Endothelial cell of umbilical vein (primary cell): ENCODE measurements at regions of chr16 and their contacts with region 1.

Region 1: GRCh38 chr16:70470927-70471341 is 16.5 kb downstream of the FCSK start:
- DNase-seq: peak; percentile 18
- H3K4me3 ChIP-seq: no peak overlapping the region
- H3K27ac ChIP-seq: no peak overlapping the region
- H3K4me1 ChIP-seq: no peaks in the 10 kb centered on the region
- H3K27me3 ChIP-seq: no peaks in the 10 kb centered on the region
- CTCF ChIP-seq: peak; percentile 36 to 58
- POLR2A ChIP-seq: no peak

Region 2: GRCh38 chr16:70276392-70276791 is 194.5 kb before region 1 on chr16:
- CTCF ChIA-PET with region 1: no interaction called
- POLR2A ChIA-PET with region 1: no interaction called
- dilution Hi-C with region 1: no loop called
- intact Hi-C with region 1: no loop called
- DNase-seq: no peak
- H3K4me3 ChIP-seq: no peak overlapping the region
- H3K27ac ChIP-seq: no peak overlapping the region
- H3K4me1 ChIP-seq: no peaks in the 10 kb centered on the region
- H3K27me3 ChIP-seq: no peaks in the 10 kb centered on the region
- CTCF ChIP-seq: no peak
- POLR2A ChIP-seq: no peak

Region 3: DNA sequence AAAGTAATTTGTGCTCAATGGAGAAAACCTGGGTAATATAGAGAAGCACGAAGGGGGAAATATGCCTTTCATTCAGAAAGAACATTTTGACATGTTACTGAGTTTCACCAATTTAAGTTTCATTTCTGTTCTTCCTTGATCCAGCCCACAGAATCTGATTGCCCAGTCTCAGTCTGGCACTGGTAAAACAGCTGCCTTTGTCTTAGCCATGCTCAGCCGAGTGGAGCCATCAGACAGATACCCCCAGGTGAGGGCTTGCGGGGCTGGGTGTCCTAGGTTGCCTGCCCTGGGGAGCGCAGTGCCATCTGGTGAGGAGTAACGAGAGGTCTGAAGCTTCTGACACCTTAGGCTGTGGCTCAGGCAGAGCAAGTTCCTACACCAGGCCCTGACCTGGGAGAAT is 106.5 kb before region 1 on chr16:
- CTCF ChIA-PET with region 1: interaction called, 22 read pairs
- POLR2A ChIA-PET with region 1: no interaction called
- dilution Hi-C with region 1: no loop called
- intact Hi-C with region 1: no loop called
- DNase-seq: no peak
- H3K4me3 ChIP-seq: no peak overlapping the region
- H3K27ac ChIP-seq: no peak overlapping the region
- H3K4me1 ChIP-seq: no peaks in the 10 kb centered on the region
- H3K27me3 ChIP-seq: no peaks in the 10 kb centered on the region
- CTCF ChIP-seq: no peak
- POLR2A ChIP-seq: no peak

Region 4: DNA sequence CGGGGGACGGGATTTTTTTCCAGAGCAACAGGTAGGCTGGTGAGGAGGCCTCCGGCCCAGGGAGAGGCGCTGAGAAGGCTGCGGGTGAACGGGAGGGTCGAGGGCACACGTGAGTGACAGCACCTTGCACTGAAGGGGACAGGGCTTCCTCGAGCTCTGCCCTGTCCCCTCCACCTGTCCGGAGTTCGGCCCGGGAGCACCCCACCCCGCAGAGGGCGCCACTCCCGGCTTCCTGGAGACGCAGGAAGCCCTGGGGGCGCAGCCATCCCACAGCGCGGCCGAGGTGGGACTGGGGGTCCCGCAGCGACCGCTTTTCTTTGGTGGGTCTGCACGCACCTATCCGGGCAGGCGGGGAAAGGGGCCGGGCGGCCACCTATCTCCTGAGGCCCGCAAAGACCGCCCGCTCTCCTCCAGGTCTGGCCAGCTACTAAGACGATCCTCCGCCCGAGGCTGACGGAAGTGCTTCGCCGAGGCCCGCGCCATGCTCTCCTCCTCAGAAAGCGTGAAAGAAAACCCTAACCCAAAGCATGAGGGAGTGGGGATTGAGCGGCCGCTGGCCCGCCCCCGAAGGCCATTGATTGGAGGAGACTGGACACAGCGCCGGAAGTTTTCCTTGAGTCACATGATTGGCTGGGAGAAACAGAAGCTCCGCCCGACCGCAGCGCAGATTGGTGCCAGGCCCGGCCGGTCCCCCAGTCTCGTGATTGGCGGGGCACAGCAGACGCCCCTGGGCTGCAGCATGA is 89.9 kb before region 1 on chr16:
- CTCF ChIA-PET with region 1: interaction called, 23 read pairs
- POLR2A ChIA-PET with region 1: no interaction called
- dilution Hi-C with region 1: no loop called
- intact Hi-C with region 1: loop called (anchors 2 kb)
- DNase-seq: peak; percentile 98
- H3K4me3 ChIP-seq: peak overlapping the region; percentile 51 to 59 (median 54)
- H3K27ac ChIP-seq: no peak overlapping the region
- H3K4me1 ChIP-seq: peaks cover 6% of the 10 kb centered on the region
- H3K27me3 ChIP-seq: no peaks in the 10 kb centered on the region
- CTCF ChIP-seq: peak; percentile 6 to 9
- POLR2A ChIP-seq: peak; percentile 94

Region 5: GRCh38 chr16:70395345-70395901 is 75.5 kb before region 1 on chr16:
- CTCF ChIA-PET with region 1: interaction called, 14 read pairs
- POLR2A ChIA-PET with region 1: no interaction called
- dilution Hi-C with region 1: no loop called
- intact Hi-C with region 1: loop called (anchors 1 kb)
- DNase-seq: peak; percentile 59
- H3K4me3 ChIP-seq: no peak overlapping the region
- H3K27ac ChIP-seq: no peak overlapping the region
- H3K4me1 ChIP-seq: no peaks in the 10 kb centered on the region
- H3K27me3 ChIP-seq: no peaks in the 10 kb centered on the region
- CTCF ChIP-seq: peak; percentile 76 to 89
- POLR2A ChIP-seq: no peak

Region 6: GRCh38 chr16:70428178-70428998 is 42.5 kb before region 1 on chr16:
- CTCF ChIA-PET with region 1: interaction called, 3 read pairs
- POLR2A ChIA-PET with region 1: no interaction called
- dilution Hi-C with region 1: no loop called
- intact Hi-C with region 1: loop called (anchors 1 kb)
- DNase-seq: peak; percentile 96
- H3K4me3 ChIP-seq: no peak overlapping the region
- H3K27ac ChIP-seq: peak overlapping the region; percentile 86
- H3K4me1 ChIP-seq: peaks cover 54% of the 10 kb centered on the region
- H3K27me3 ChIP-seq: no peaks in the 10 kb centered on the region
- CTCF ChIP-seq: no peak
- POLR2A ChIP-seq: peak; percentile 77

Region 7: GRCh38 chr16:70481929-70482536 is 11.1 kb after region 1 on chr16:
- CTCF ChIA-PET with region 1: no interaction called
- POLR2A ChIA-PET with region 1: no interaction called
- dilution Hi-C with region 1: no loop called
- intact Hi-C with region 1: no loop called
- DNase-seq: no peak
- H3K4me3 ChIP-seq: no peak overlapping the region
- H3K27ac ChIP-seq: no peak overlapping the region
- H3K4me1 ChIP-seq: peaks cover 13% of the 10 kb centered on the region
- H3K27me3 ChIP-seq: no peaks in the 10 kb centered on the region
- CTCF ChIP-seq: no peak
- POLR2A ChIP-seq: no peak

Region 8: DNA sequence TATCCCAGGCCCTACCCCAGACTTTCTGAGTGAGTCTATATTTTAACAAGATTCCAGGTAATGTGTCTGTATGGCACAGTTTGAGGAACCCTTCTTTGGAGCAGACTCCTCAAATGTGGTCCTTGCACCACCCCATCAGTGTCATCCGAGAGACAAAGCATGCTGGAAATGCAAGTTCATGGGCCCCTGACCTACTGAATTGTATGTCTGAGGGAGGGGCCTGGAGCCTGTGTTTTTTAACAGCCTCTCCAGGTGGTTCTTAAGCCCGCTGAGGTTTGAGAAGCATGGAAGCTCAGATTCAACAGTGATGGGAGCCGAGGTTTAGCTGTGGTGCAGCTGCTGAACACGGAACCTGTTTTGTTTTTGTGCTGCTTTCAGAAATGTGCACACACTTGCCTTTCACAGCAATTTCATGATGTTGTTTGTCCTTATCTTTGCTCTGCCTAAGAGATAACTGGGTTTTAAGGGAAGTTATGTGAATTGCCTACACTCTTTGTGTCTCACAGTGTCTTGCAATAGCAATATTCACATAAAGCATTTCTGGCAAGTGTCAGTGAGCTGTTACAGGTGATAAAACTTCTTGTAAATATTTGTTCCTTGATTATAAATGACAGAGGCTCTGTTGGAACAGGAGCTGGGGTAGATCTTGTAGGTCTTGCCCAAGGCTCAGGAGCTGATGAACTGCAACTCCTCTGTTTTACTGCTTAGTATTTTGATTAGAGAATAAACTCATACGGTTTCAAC is 143.4 kb after region 1 on chr16:
- CTCF ChIA-PET with region 1: no interaction called
- POLR2A ChIA-PET with region 1: no interaction called
- dilution Hi-C with region 1: no loop called
- intact Hi-C with region 1: no loop called
- DNase-seq: no peak
- H3K4me3 ChIP-seq: no peak overlapping the region
- H3K27ac ChIP-seq: no peak overlapping the region
- H3K4me1 ChIP-seq: no peaks in the 10 kb centered on the region
- H3K27me3 ChIP-seq: no peaks in the 10 kb centered on the region
- CTCF ChIP-seq: no peak
- POLR2A ChIP-seq: no peak